ENCODE measurements at regions of chr2 and their contacts with region 1.

Region 1: DNA sequence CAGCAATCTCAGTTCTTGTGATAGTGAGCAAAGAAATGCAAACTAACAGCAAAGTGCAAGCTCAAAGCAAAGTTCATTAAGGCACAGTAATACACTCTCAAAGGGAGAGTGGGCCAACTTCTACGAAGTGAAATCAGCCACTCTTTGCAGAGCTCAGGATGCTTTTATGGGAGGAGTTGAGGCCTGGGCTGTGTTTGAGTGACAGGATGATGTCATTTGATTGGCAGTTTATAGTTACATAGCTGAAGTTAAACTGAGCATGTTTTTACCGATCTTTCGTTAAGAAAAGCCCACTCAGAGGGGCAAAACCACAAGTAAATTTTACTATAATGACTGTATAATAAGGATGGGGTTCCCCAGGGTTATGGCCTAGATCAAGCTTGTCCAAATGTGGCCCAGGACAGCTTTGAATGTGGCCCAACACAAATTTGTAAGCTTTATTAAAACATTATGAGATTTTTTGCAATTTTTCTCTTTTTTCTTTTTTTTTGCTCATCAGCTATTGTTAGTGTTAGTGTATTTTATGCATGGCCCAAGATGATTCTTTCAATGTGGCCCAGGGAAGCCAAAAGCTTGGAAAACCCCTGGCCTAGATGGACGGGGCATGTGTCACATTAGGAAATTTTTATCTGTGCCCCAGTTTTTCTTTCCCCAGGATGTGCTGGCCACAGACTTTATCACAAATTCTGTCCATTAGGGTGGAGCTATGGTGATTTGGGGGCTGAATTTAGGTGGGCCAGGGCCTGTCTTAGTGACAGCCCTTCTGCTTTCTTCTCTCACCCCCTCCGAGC is 8.3 kb upstream of the DNAH7 start:
- DNase-seq: no peak
- ATAC-seq: peak in 1 of 2 donors; percentile 64

Region 2: DNA sequence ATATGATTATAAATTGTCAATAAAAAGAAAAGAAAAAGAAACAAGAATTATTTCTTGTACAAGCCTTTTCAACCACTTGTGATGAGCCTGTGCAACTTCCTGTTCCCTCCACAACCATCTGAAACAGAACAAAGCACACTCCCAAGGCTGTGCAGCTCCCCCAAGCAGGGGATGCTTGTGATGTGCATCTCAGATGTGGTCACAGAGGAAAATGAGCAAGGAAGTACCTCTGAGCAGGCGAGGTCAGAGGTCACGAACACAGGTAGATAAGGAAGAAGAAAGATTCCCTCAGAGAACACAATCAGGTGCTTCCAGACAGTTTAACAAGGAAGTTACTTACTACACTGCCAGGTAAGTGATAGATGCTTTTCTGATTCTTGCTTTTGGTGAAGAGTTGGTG is 694.8 kb before region 1 on chr2:
- intact Hi-C with region 1: no loop called
- DNase-seq: no peak
- ATAC-seq: no peak

Region 3: GRCh38 chr2:195891081-195891480 is 185.9 kb before region 1 on chr2:
- intact Hi-C with region 1: no loop called
- DNase-seq: no peak
- ATAC-seq: no peak

Region 4: GRCh38 chr2:196160101-196160500 is 83.1 kb after region 1 on chr2:
- intact Hi-C with region 1: loop called in 1 of 2 experiments (anchors 10 kb)
- DNase-seq: no peak
- ATAC-seq: peak; percentile 81 to 83

Region 5: GRCh38 chr2:196274387-196274809 is 197.4 kb after region 1 on chr2:
- intact Hi-C with region 1: loop called in 1 of 2 experiments (anchors 5 kb)
- DNase-seq: no peak
- ATAC-seq: peak; percentile 88 to 94

Region 6: GRCh38 chr2:196337208-196337953 is 260.4 kb after region 1 on chr2:
- intact Hi-C with region 1: loop called in 1 of 2 experiments (anchors 10 kb)
- DNase-seq: no peak
- ATAC-seq: peak in 1 of 2 donors; percentile 40

Region 7: DNA sequence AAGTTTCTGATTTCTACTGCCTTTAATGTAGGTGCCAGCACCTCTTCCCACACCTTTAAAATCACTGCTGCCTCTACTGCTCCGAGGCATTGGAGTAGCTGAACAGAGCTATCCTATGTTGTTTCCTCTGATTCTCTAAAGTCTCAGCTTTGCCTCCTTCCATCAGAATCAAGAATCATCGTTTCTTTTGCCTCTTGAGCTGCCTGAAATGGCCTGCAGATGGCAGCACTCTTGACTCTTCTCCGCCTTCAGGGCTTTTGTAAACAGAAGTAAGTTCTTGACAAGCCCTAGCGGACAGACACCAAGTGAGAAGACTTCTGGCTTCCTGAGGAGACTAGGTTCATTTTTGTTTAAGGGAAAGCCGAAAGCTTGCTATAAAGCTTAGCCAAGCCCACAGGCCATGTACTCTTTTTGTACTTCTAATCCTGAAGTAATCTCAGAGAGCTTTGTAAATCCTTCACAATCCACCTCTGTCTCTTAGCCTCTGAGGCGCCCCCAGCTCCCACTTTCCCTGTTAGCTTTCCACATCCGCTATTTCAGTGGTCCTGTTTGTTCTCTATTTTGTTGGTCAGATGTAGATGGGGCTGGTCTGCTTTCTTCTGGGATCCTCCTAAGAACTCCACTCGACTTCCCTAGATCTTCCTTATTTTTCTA is 674.1 kb after region 1 on chr2:
- intact Hi-C with region 1: loop called in 1 of 2 experiments (anchors 10 kb)
- DNase-seq: peak; percentile 55
- ATAC-seq: peak; percentile 68

Measured in left cardiac atrium (tissue), 4 donors.